ENCODE measurements at regions of chr17 and their contacts with region 1.

Region 1: DNA sequence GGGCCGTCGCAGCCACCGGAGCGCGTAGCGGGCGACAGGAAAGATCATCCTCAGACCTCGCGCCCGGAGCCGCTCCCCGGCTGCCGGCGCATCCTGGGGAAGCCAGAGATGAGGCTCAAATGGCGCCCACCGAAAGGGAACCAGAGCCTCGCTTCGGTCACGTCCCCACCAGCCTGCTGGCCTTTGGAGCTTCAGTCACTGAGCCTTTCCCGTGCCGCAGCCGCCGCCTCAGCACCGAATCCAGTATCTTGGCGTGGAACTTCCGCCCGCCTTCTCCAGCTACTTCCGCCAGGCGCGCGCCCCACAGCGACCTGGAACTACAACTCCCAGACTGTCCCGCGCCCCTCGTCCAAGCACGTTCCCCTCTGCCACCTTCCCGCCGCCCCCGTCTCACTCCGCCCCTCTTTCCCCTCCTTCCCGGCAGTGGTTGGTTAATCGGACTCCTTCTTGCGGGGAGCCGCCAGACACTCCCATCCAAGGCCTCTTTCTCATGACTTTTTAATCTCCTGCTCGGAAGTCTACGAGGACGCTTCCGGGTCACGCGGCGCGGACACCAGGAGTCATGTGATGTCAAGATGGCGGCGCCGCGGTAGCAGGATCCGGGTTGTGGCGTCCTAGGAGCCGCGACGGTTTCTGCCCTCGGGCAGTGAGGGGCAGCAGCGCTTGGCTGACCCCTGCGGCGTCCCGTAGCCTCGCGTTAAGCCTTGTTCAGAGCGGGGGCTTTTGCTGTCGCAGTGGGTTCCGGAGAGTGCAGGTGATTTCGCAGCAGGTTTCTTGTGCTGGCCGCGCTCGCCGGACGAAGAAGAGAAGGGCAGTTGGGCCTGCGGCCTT is at the starts of genes SMCR8 and TOP3A:
- DNase-seq: peak; percentile 97
- ATAC-seq: peak; percentile 94 to 96
- H3K4me3 ChIP-seq: peak within 1 kb of the TSS; percentile 79 to 94 (median 88)
- H3K27ac ChIP-seq: peak within 1 kb of the TSS; percentile 90 to 96 (median 93)
- H3K4me1 ChIP-seq: peaks cover 59 to 60% of the 10 kb centered on the region in 2 donors
- H3K27me3 ChIP-seq: no peaks in the 10 kb centered on the region
- CTCF ChIP-seq: peak in 2 of 5 experiments; percentile 7 to 30
- POLR2A ChIP-seq: peak; percentile 57 to 59
- total RNA-seq, gene SMCR8: 9.2 to 15.7 (median 12.4) TPM
- total RNA-seq, gene TOP3A: 17.7 to 62.4 (median 22.1) TPM

Region 2: DNA sequence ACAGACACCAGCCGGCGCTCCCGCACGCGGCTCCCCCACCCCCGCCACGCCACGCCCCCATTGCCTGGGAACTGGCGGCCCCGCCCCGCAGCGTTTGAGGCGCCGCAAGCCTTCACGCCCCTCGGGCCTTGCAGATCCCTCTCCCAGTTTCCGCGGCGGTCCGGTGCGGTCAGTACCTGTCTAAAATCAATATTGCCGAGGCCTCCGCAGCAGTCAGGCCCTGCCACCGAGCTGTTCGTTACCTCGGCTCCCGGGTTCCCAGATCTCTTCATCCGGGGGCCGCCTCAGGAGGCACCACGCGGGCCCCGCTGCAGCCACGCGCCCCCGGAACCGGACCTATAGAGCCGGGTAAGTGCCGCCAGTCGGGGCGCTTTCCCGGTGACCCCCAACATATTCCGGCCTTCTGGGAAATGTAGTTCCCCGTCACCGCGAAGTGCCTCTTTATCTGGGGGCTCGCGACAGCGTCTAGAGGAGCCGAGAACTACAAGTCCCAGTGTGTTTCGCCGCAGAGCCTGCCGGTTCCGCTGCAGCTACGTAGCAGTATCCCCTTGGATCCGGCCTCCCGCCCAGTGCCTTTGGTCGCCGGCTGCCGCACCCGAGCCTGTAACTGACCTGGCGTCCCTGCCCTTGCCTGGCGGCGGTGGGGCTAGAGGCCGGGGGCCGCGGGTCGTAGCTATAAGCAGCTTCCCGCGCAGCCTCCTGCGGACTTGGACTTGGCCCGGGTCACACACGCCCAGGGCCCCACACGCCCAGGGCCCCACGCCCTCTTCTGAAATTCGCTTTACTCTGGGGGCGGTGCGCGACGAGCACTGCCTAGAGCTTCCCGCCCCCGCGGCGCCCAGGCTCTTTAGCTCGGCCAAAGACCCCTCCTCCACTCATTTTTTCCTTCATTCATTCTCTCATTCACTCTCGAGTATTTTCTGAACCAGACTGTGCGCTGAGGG is 723.3 kb before region 1 on chr17 and contains the start of gene PEMT:
- in situ Hi-C with region 1: no loop called
- intact Hi-C with region 1: loop called (anchors 10 kb)
- DNase-seq: peak; percentile 97 to 98
- ATAC-seq: peak; percentile 98
- H3K4me3 ChIP-seq: peak within 1 kb of the TSS; percentile 75 to 95 (median 86)
- H3K27ac ChIP-seq: peak within 1 kb of the TSS; percentile 83 to 94 (median 91)
- H3K4me1 ChIP-seq: peaks cover 19 to 22% of the 10 kb centered on the region in 2 donors
- H3K27me3 ChIP-seq: no peaks in the 10 kb centered on the region
- CTCF ChIP-seq: peak in 1 of 5 experiments; percentile 20
- POLR2A ChIP-seq: peak; percentile 60 to 66
- total RNA-seq, gene PEMT: 32.8 to 48.2 (median 34.2) TPM

Region 3: GRCh38 chr17:18087610-18088491 is 227.1 kb before region 1 on chr17 and contains the start of gene DRG2:
- in situ Hi-C with region 1: no loop called
- intact Hi-C with region 1: loop called (anchors 2 kb)
- DNase-seq: peak; percentile 82 to 90
- ATAC-seq: peak; percentile 95 to 98
- H3K4me3 ChIP-seq: peak within 1 kb of the TSS; percentile 70 to 80 (median 71)
- H3K27ac ChIP-seq: peak within 1 kb of the TSS; percentile 81 to 85 (median 84)
- H3K4me1 ChIP-seq: peaks cover 13 to 15% of the 10 kb centered on the region in 2 donors
- H3K27me3 ChIP-seq: no peaks in the 10 kb centered on the region
- CTCF ChIP-seq: peak in 4 of 5 experiments; percentile 15 to 28 (median 20)
- POLR2A ChIP-seq: peak; percentile 22 to 53
- total RNA-seq, gene DRG2: 34.7 to 52.3 (median 37.4) TPM

Region 4: GRCh38 chr17:18176176-18176575 is 138.8 kb before region 1 on chr17:
- in situ Hi-C with region 1: no loop called
- intact Hi-C with region 1: no loop called
- DNase-seq: no peak
- ATAC-seq: no peak
- H3K4me3 ChIP-seq: no peak overlapping the region
- H3K27ac ChIP-seq: no peak overlapping the region
- H3K4me1 ChIP-seq: peaks cover 0 to 4% of the 10 kb centered on the region in 2 donors
- H3K27me3 ChIP-seq: no peaks in the 10 kb centered on the region
- CTCF ChIP-seq: no peak
- POLR2A ChIP-seq: no peak

Region 5: GRCh38 chr17:18248300-18248731 is 66.6 kb before region 1 on chr17:
- in situ Hi-C with region 1: no loop called
- intact Hi-C with region 1: loop called (anchors 1 kb)
- DNase-seq: peak; percentile 37 to 62
- ATAC-seq: peak; percentile 71 to 77
- H3K4me3 ChIP-seq: no peak overlapping the region
- H3K27ac ChIP-seq: peak overlapping the region; percentile 37 to 65 (median 54)
- H3K4me1 ChIP-seq: peaks cover 5 to 8% of the 10 kb centered on the region in 2 donors
- H3K27me3 ChIP-seq: no peaks in the 10 kb centered on the region
- CTCF ChIP-seq: peak; percentile 53 to 68 (median 60)
- POLR2A ChIP-seq: no peak

Region 6: DNA sequence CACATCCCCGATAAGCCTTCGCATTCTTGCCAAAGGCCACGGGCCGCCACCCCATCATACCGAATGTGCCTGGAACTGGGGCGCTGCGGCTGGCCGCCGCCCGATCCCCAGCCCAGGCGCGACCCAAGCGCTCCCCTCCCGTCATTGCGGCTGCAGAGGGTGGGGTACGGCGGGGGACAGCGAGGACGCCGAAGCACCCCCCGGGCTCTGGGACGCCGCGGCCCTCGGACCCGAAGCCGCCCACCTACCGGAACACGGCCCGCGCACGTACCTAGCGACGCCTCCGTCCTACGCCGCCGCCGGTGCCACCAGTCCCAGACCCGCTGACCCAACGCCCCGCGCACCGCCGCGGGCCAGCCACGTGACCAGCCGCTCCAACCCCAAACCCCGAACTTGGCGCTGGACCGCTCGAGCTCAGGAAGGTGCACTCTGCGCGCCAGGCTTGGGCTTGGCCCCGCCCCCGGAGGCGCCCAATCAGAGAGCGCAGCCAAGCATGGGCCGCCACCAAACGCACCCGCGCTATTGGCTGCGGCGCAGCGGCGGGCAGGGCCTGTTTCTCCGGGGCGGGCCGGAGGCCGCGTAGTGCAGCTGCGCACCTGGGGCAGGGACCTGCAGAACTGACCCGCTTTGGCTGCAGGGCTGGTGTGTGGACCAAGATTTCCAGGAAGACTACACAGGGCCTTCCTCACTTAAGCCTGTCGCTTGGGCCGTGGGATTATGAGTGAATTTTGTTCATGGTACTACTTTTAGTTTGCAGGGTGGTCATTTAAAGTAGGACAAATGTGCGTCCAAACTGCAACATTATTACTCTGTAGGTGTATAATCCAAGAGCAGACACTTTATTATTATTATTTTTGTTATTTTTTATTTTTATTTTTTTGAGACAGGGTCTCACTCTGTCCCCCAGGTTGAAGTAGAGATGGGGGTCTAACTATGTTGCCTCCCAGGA is 48.4 kb after region 1 on chr17 and contains the start of gene SHMT1:
- in situ Hi-C with region 1: no loop called
- intact Hi-C with region 1: loop called (anchors 1 kb)
- DNase-seq: peak; percentile 93 to 95
- ATAC-seq: peak; percentile 94 to 95
- H3K4me3 ChIP-seq: peak within 1 kb of the TSS; percentile 72 to 98 (median 83)
- H3K27ac ChIP-seq: peak within 1 kb of the TSS; percentile 85 to 91 (median 88)
- H3K4me1 ChIP-seq: peaks cover 12 to 19% of the 10 kb centered on the region in 2 donors
- H3K27me3 ChIP-seq: no peaks in the 10 kb centered on the region
- CTCF ChIP-seq: no peak
- POLR2A ChIP-seq: peak; percentile 64 to 71
- total RNA-seq, gene SHMT1: 12.8 to 19.2 (median 14.0) TPM